Endothelial cell of umbilical vein (primary cell): ENCODE measurements at regions of chr15 and their contacts with region 1.

Region 1: GRCh38 chr15:70806992-70807712 is 43.8 kb upstream of the UACA start:
- DNase-seq: peak; percentile 82
- H3K4me3 ChIP-seq: no peak overlapping the region
- H3K27ac ChIP-seq: peak overlapping the region; percentile 76
- H3K4me1 ChIP-seq: peaks cover 30% of the 10 kb centered on the region
- H3K27me3 ChIP-seq: no peaks in the 10 kb centered on the region
- CTCF ChIP-seq: no peak
- POLR2A ChIP-seq: no peak

Region 2: GRCh38 chr15:70679919-70680231 is 127.3 kb before region 1 on chr15:
- CTCF ChIA-PET with region 1: interaction called, 118 read pairs
- POLR2A ChIA-PET with region 1: interaction called, 3 read pairs
- dilution Hi-C with region 1: no loop called
- intact Hi-C with region 1: loop called (anchors 1 kb)
- DNase-seq: no peak
- H3K4me3 ChIP-seq: no peak overlapping the region
- H3K27ac ChIP-seq: no peak overlapping the region
- H3K4me1 ChIP-seq: peaks cover 12% of the 10 kb centered on the region
- H3K27me3 ChIP-seq: no peaks in the 10 kb centered on the region
- CTCF ChIP-seq: no peak
- POLR2A ChIP-seq: no peak

Region 3: GRCh38 chr15:70713714-70714414 is 93.3 kb before region 1 on chr15:
- CTCF ChIA-PET with region 1: interaction called, 17 read pairs
- POLR2A ChIA-PET with region 1: no interaction called
- dilution Hi-C with region 1: no loop called
- intact Hi-C with region 1: no loop called
- DNase-seq: peak; percentile 56
- H3K4me3 ChIP-seq: peak overlapping the region in 1 of 3 experiments; percentile 36
- H3K27ac ChIP-seq: peak overlapping the region; percentile 74
- H3K4me1 ChIP-seq: peaks cover 55% of the 10 kb centered on the region
- H3K27me3 ChIP-seq: no peaks in the 10 kb centered on the region
- CTCF ChIP-seq: no peak
- POLR2A ChIP-seq: no peak

Region 4: DNA sequence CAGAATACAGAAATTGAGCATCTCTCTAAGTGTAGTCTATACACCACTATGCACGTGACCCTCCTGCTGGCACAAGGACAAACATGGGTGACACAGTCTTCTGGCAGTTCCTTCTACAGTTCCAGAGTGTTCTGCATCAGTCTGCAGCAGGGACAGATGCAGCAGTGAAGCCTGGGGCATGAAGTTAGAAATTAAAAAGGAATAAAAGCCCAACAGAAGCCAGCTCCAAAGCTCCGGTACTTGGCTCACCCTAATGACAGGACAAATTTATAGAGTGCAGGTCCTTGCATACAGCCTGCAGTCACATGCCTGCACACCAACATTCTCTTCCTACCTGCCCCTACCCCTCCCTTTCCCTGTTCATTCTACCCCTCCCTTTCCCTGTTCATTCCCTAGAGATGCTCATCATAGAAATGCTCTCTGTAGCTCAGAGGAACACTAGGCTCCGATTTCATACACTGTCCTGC is 58.8 kb before region 1 on chr15:
- CTCF ChIA-PET with region 1: interaction called, 23 read pairs
- POLR2A ChIA-PET with region 1: no interaction called
- dilution Hi-C with region 1: no loop called
- intact Hi-C with region 1: no loop called
- DNase-seq: no peak
- H3K4me3 ChIP-seq: no peak overlapping the region
- H3K27ac ChIP-seq: no peak overlapping the region
- H3K4me1 ChIP-seq: peaks cover 3% of the 10 kb centered on the region
- H3K27me3 ChIP-seq: no peaks in the 10 kb centered on the region
- CTCF ChIP-seq: no peak
- POLR2A ChIP-seq: no peak

Region 5: DNA sequence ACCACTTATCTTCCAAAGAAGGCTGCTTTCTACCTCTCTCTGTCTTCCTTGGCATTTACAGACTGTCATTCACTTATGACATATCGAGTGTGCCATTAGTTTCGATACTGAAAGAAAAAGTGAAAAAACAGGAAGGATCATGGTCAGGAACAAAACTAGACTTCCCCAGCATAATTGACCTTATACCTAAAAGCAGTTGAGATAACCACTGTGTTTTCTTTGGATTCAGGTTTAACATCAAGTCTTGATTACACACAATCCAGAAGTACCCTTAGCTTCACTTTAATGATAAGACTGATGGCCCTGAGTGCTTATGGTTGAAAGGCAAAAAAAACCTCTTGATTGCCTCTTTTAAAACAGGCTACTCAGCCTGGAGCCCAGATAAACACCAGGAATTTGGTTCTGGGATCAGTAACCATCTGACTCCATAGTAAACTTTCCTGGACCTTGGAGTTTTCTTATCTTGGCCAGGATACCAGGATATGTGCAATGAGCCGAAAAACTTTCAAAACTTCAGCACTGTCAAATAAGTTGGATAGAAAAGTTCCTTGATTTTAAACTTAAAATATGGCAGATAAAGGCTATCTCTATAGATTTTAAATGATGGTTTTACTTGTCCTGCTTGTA is 38.8 kb before region 1 on chr15:
- CTCF ChIA-PET with region 1: interaction called, 15 read pairs
- POLR2A ChIA-PET with region 1: no interaction called
- dilution Hi-C with region 1: no loop called
- intact Hi-C with region 1: loop called (anchors 1 kb)
- DNase-seq: peak; percentile 55
- H3K4me3 ChIP-seq: peak overlapping the region in 1 of 3 experiments; percentile 14
- H3K27ac ChIP-seq: peak overlapping the region; percentile 15
- H3K4me1 ChIP-seq: peaks cover 36% of the 10 kb centered on the region
- H3K27me3 ChIP-seq: no peaks in the 10 kb centered on the region
- CTCF ChIP-seq: no peak
- POLR2A ChIP-seq: no peak

Region 6: DNA sequence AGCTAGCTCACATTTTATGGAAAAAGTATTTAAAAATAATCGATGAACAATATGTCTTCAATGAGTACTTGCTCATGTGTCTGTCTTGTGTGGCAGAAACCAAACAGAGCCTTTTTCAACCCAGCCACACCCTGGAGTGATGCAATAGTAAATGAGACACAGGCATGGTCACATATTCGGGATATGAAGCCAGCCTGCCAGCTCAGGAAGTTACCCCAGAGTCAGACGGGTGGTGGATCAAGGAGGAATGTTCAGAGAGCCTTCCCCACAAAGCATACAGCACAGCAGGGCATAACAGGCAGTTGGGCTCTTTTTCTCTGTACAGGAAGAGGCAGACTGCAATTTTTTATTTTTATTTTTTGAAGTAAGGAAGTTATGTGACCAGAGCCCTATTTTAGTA is 19.5 kb after region 1 on chr15:
- CTCF ChIA-PET with region 1: interaction called, 32 read pairs
- POLR2A ChIA-PET with region 1: no interaction called
- dilution Hi-C with region 1: no loop called
- intact Hi-C with region 1: no loop called
- DNase-seq: peak; percentile 36
- H3K4me3 ChIP-seq: no peak overlapping the region
- H3K27ac ChIP-seq: no peak overlapping the region
- H3K4me1 ChIP-seq: no peaks in the 10 kb centered on the region
- H3K27me3 ChIP-seq: no peaks in the 10 kb centered on the region
- CTCF ChIP-seq: no peak
- POLR2A ChIP-seq: no peak

Region 7: GRCh38 chr15:71003319-71003718 is 196.2 kb after region 1 on chr15:
- CTCF ChIA-PET with region 1: no interaction called
- POLR2A ChIA-PET with region 1: no interaction called
- dilution Hi-C with region 1: no loop called
- intact Hi-C with region 1: no loop called
- DNase-seq: peak; percentile 21
- H3K4me3 ChIP-seq: no peak overlapping the region
- H3K27ac ChIP-seq: no peak overlapping the region
- H3K4me1 ChIP-seq: peaks cover 9% of the 10 kb centered on the region
- H3K27me3 ChIP-seq: no peaks in the 10 kb centered on the region
- CTCF ChIP-seq: no peak
- POLR2A ChIP-seq: no peak